HEK293 (cell line): ENCODE measurements at regions of chr16 and their contacts with region 1.

Region 1: GRCh38 chr16:55465077-55465896 is 13.7 kb upstream of the MMP2 start:
- H3K4me3 ChIP-seq: no peak overlapping the region
- H3K27ac ChIP-seq: no peak overlapping the region
- H3K4me1 ChIP-seq: no peaks in the 10 kb centered on the region
- CTCF ChIP-seq: peak; percentile 98

Region 2: GRCh38 chr16:55444754-55445485 is 20.4 kb before region 1 on chr16:
- CTCF ChIA-PET with region 1: interaction called, 12 read pairs
- POLR2A ChIA-PET with region 1: no interaction called
- H3K4me3 ChIP-seq: no peak overlapping the region
- H3K27ac ChIP-seq: no peak overlapping the region
- H3K4me1 ChIP-seq: no peaks in the 10 kb centered on the region
- CTCF ChIP-seq: no peak

Region 3: GRCh38 chr16:55476625-55477533 is 11.6 kb after region 1 on chr16:
- CTCF ChIA-PET with region 1: interaction called, 20 read pairs
- POLR2A ChIA-PET with region 1: interaction called, 3 read pairs
- H3K4me3 ChIP-seq: no peak overlapping the region
- H3K27ac ChIP-seq: no peak overlapping the region
- H3K4me1 ChIP-seq: peaks cover 5% of the 10 kb centered on the region; the same call in 1 of the 2 replicates
- CTCF ChIP-seq: no peak

Region 4: GRCh38 chr16:55502801-55503366 is 37.6 kb after region 1 on chr16:
- CTCF ChIA-PET with region 1: interaction called, 35 read pairs
- POLR2A ChIA-PET with region 1: no interaction called
- H3K4me3 ChIP-seq: no peak overlapping the region
- H3K27ac ChIP-seq: peak overlapping the region; percentile 19; the same call in 1 of the 2 replicates
- H3K4me1 ChIP-seq: peaks cover 15% of the 10 kb centered on the region
- CTCF ChIP-seq: no peak

Region 5: DNA sequence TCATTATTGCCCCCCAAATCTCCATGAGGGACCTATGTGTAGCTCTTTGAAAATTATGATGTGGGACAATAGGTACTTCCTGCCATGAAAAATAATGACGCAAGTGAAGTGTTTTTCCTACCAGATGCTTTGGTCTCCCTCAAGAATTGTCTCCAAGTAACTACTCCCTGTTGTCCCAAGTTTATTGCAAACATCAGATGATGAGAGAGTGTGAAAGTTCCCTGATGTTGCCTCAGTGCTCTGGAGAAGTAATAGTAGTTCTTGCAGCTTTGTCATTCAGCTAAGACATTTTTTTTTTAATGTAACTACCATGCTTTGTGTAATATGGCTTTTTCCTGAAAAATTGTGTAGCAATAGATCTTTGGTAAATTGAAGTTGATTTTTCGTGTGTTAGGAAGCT is 63.7 kb after region 1 on chr16:
- CTCF ChIA-PET with region 1: interaction called, 97 read pairs
- POLR2A ChIA-PET with region 1: no interaction called
- H3K4me3 ChIP-seq: no peak overlapping the region
- H3K27ac ChIP-seq: no peak overlapping the region
- H3K4me1 ChIP-seq: no peaks in the 10 kb centered on the region
- CTCF ChIP-seq: no peak

Region 6: GRCh38 chr16:55562936-55563335 is 97.6 kb after region 1 on chr16:
- CTCF ChIA-PET with region 1: interaction called, 15 read pairs
- POLR2A ChIA-PET with region 1: no interaction called
- H3K4me3 ChIP-seq: no peak overlapping the region
- H3K27ac ChIP-seq: no peak overlapping the region
- H3K4me1 ChIP-seq: 0 out of 2 replicates have a peak, but pooled peaks cover 2% of the 10 kb centered on the region
- CTCF ChIP-seq: no peak

Region 7: GRCh38 chr16:55828680-55829079 is 363.4 kb after region 1 on chr16:
- CTCF ChIA-PET with region 1: no interaction called
- POLR2A ChIA-PET with region 1: no interaction called
- H3K4me3 ChIP-seq: no peak overlapping the region
- H3K27ac ChIP-seq: no peak overlapping the region
- H3K4me1 ChIP-seq: no peaks in the 10 kb centered on the region
- CTCF ChIP-seq: no peak

Region 8: GRCh38 chr16:55842369-55843104 is 377.2 kb after region 1 on chr16:
- CTCF ChIA-PET with region 1: interaction called, 26 read pairs
- POLR2A ChIA-PET with region 1: no interaction called
- H3K4me3 ChIP-seq: no peak overlapping the region
- H3K27ac ChIP-seq: no peak overlapping the region
- H3K4me1 ChIP-seq: no peaks in the 10 kb centered on the region
- CTCF ChIP-seq: peak; percentile 42; the same call in 1 of the 2 replicates